Activated CD4-positive, alpha-beta T cell treated with anti-CD3 and anti-CD28 coated beads, Interleukin-2, amount 10 ng/mL, durations not matched to agents 24 days and 14 days (primary cell): ENCODE measurements at regions of chr9 and their contacts with region 1.

Region 1: DNA sequence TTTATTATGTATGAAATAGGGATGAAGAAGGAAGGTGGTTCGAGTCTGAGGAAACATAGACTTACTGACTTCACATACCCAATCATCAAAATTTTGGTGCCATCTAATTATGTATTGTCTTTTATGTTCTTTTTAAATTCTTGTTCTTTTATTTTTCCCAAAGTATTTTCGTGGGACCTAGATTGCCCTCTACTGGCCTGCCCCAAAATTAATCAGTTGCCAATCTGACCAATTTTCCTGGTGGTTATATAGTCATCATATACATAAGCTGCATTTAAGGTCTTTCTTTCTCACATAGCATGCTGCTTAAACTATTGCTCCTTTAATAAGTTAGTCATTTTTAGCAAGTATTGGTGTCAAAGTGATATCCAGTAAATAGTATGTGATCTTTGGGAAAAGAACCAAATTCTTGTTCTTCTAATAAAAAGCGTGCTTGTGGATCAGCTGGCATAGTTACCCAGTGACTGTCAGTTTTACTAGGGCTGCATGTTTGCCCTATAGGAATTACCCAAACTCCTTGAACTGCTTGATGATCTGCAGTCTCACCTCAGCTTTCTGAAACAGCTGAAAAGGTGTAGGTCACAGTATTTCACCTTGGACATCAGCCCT is 223.5 kb downstream of the SH3GL2 start:
- DNase-seq: no peak
- H3K4me3 Mint-ChIP-seq: no peak overlapping the region
- H3K27ac Mint-ChIP-seq: no peak overlapping the region
- H3K4me1 Mint-ChIP-seq: peaks cover 2% of the 10 kb centered on the region
- H3K27me3 Mint-ChIP-seq: no peaks in the 10 kb centered on the region

Region 2: DNA sequence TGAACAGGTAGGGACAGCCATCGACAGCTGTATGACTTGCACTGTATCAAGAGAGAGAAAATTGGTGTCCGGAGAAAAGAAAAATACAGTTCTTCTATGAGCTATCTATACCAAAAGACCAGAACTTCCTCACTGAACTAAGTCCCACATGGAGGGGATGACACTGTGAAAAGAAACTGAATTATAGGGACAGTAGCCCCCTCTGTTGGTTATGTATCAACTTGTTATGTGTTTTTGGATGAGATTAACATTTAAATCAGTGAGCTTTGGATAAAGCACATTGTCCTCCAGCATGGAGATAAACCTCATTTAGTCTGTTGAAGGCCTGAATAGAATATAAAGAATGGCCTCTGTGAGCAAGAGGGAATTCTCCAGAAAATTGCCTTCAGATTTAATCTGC is 400.0 kb before region 1 on chr9:
- intact Hi-C with region 1: no loop called
- DNase-seq: no peak
- H3K4me3 Mint-ChIP-seq: no peak overlapping the region
- H3K27ac Mint-ChIP-seq: no peak overlapping the region
- H3K4me1 Mint-ChIP-seq: no peaks in the 10 kb centered on the region
- H3K27me3 Mint-ChIP-seq: no peaks in the 10 kb centered on the region

Region 3: DNA sequence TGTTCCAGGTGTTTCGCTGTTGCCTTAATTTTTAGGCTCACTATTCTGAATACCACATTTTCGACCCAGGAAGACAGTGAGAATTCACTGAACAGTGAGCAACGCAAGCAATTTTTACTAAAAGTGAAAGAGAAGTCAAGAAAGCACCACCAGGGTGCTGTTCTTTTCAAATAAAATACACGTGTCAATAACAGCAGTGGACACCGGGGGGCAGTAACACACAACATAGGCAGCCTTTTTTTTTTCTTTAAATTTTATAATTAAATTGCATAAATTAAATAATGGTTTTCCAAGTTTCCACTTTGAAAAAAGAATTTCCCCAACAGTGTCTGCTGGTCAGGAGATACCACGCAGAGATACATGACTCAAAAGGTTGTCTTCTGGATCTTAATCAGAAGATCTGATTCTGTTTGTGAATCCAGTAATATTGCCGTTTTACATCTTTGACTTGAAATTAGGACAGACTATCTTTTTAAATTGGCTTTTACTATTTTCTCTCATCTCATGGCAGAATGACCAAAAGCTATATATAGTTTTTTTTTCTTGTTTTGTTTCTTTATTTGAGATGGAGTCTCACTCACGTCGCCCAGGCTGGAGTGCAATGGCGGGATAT is 270.6 kb before region 1 on chr9:
- intact Hi-C with region 1: loop called (anchors 10 kb)
- DNase-seq: peak; percentile 67
- H3K4me3 Mint-ChIP-seq: no peak overlapping the region
- H3K27ac Mint-ChIP-seq: no peak overlapping the region
- H3K4me1 Mint-ChIP-seq: no peaks in the 10 kb centered on the region
- H3K27me3 Mint-ChIP-seq: no peaks in the 10 kb centered on the region